ENCODE measurements at regions of chr10 and their contacts with region 1.

Region 1: GRCh38 chr10:97463363-97464132 is 17.6 kb downstream of the ZDHHC16 start:
- DNase-seq: peak; percentile 42 to 56 (median 42)
- H3K4me3 ChIP-seq: no peak overlapping the region
- H3K27ac ChIP-seq: no peak overlapping the region
- H3K4me1 ChIP-seq: no peaks in the 10 kb centered on the region
- H3K27me3 ChIP-seq: no peaks in the 10 kb centered on the region

Region 2: GRCh38 chr10:97250952-97251351 is 212.6 kb before region 1 on chr10:
- CTCF ChIA-PET with region 1: no interaction called
- POLR2A ChIA-PET with region 1: no interaction called
- DNase-seq: peak in 2 of 3 donors; percentile 22 to 28
- H3K4me3 ChIP-seq: no peak overlapping the region
- H3K27ac ChIP-seq: no peak overlapping the region
- H3K4me1 ChIP-seq: no peaks in the 10 kb centered on the region
- H3K27me3 ChIP-seq: no peaks in the 10 kb centered on the region

Region 3: GRCh38 chr10:97445722-97446639 is 17.6 kb before region 1 on chr10 and contains the starts of genes EXOSC1 and ZDHHC16:
- CTCF ChIA-PET with region 1: interaction called, 10 read pairs
- POLR2A ChIA-PET with region 1: no interaction called
- DNase-seq: peak; percentile 92 to 96 (median 94)
- H3K4me3 ChIP-seq: peak within 1 kb of the TSS; percentile 86 to 99 (median 92)
- H3K27ac ChIP-seq: peak within 1 kb of the TSS; percentile 64 to 79
- H3K4me1 ChIP-seq: peaks cover 9 to 30% (median 19%) of the 10 kb centered on the region in 4 experiments
- H3K27me3 ChIP-seq: no peaks in the 10 kb centered on the region

Region 4: GRCh38 chr10:97475936-97476594 is 12.5 kb after region 1 on chr10:
- CTCF ChIA-PET with region 1: interaction called, 20 read pairs
- POLR2A ChIA-PET with region 1: interaction called, 4 read pairs
- DNase-seq: no peak
- H3K4me3 ChIP-seq: no peak overlapping the region
- H3K27ac ChIP-seq: no peak overlapping the region
- H3K4me1 ChIP-seq: no peaks in the 10 kb centered on the region
- H3K27me3 ChIP-seq: no peaks in the 10 kb centered on the region